GM18951 (cell line): ENCODE measurements at regions of chr2 and their contacts with region 1.

Region 1: DNA sequence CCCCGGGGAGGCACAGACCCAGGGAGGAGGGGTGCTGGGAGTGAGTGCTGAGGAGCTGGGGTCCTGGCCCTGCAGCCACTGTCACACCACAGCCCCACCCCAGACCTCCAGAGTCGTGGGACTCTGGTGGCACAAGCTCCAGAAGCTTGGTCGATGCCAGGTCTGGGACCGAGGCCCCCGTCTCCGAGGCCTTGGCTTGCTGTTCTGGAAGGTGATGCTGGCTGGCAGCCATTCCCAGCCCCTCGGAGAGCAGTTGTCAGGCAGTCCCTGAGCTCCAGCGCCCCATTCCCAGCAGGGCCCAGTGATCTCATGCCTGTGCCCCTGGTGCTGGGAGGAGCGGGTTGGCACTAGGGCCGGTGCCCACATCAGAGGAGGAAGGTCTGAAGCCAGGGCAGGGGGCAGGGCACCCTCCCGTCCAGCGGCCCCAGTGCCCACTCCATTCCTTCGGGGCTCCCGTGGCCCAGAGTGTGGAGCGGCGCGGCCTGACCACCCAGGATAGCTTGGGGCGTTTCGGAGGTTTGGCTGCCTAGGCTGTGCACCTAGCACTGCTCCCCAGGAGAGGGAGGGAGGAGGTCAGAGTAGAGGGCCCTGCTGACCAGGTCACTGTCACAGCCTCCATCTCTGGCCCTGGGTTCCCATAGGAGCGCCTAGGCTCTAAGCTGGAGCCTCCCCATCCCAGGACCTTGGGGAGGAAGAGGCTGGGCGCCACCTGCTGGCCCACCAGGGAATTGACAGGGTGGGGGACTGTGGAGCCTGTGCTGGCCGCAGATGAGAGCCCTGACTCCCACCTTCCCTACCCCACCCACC is 16.8 kb upstream of the ALPI start:
- POLR2A ChIP-seq: no peak

Region 2: DNA sequence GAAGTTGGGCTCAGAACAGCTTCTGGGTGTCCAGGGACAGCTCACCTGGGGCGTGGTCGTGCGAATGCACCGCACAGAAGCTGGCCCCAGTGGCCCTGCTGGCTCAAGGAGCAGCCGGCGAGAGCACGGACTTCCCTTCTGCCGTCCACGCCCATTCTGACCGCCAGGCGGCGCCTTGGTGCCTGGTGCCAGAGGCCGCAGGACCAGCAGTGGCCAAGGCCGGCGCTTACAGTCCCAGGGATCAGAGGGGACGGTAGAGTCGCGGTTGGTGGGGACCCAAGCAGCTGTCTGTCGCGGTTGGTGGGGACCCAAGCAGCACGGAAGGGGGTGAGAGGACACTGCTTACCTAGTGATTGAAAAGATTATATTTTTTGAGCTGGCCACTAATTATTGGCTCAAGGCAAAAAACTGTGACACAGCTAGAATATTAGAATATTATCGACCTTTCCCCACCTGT is 538.6 kb before region 1 on chr2:
- in situ Hi-C with region 1: loop called (anchors 10 kb)
- POLR2A ChIP-seq: no peak

Region 3: DNA sequence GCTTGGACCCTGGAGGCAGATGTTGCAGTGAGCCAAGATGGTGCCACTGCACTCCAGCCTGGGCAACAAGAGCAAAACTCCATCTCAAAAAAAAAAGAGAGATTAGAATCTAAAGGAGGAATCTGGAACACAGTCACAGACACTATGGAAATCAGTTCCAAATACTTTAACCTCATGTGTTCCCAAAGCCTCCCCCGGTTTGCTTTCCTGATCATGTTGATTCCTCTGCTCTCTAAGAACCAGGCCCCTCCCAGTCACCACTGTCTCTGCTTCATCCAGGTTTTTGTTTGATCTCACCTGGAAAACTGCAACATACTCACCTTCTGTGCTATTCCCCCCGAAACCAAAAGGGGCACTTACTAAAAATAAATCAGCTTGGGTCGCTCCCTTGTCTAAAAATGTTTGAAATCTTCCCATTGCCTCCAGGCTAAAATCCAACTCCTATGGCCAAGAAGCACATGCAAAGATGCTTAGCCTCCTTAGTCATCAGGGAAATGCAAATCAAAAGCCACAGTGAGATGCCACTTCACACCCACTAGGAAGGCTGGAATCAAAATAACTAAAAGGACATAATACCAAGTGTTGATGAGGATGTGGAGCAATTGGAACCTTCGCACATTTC is 587.1 kb after region 1 on chr2:
- in situ Hi-C with region 1: no loop called
- POLR2A ChIP-seq: no peak